Sigmoid colon (tissue), 7 donors: ENCODE measurements at regions of chr5 and their contacts with region 1.

Region 1: DNA sequence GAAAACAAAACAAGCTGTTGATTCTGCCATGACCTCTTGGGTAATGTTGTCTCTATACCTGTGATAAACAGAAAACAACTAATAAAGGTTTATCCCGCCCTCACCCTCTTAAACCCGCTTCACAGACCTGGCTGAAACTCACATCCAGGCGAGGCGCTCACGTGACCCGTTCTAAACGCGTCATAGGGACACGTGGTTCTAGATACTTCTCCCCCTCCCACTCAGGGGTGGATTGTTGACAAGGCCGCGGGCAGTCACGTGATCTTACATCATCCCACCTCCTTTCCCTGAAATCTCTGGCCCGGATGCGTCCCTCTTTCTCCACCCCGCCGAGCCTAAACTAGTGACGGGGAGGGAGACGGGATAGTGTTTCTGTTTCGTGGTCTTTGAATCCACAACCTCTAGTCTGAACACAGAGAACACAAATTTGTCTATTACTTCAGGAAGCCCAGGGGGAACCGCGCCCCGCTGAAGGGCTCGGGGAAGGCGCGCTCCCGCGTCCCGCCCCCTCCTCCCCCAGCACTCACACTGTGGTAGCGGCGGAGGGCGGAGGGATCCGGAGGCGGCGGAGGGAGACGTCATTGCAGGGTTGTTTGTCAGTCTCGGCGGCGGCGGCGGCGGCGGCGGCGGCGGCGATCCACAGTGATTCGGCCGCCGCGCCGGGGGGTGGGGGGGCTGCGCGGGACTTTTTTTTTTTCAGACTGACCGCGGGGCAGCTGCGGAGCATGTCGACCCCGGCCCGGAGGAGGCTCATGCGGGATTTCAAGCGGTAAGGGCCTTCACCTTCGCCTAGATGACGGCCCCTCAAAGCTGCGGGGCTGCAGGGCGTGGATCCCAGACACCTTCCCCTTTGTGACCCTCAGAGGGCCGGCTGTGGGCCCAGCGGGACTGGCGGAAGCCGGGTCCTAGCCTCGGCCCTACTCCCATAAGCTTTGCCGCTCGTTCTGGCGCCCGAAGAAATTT is at the start of gene UBE2B:
- DNase-seq: peak; percentile 100
- H3K4me3 ChIP-seq: peak within 1 kb of the TSS; percentile 72 to 99 (median 96)
- H3K27ac ChIP-seq: peak within 1 kb of the TSS; percentile 97 to 98 (median 98)
- H3K4me1 ChIP-seq: peaks cover 0 to 47% (median 35%) of the 10 kb centered on the region in 4 donors
- H3K27me3 ChIP-seq: no peaks in the 10 kb centered on the region
- CTCF ChIP-seq: no peak
- EP300 ChIP-seq: peak; percentile 22 to 96 (median 50)
- POLR2A ChIP-seq: peak; percentile 49 to 54
- total RNA-seq, gene UBE2B: 72.2 to 122 (median 93.9) TPM

Region 2: GRCh38 chr5:133853646-133854365 is 517.3 kb before region 1 on chr5:
- intact Hi-C with region 1: no loop called
- DNase-seq: no peak
- H3K4me3 ChIP-seq: no peak overlapping the region
- H3K27ac ChIP-seq: no peak overlapping the region
- H3K4me1 ChIP-seq: no peaks in the 10 kb centered on the region
- H3K27me3 ChIP-seq: no peaks in the 10 kb centered on the region
- CTCF ChIP-seq: no peak
- EP300 ChIP-seq: no peak
- POLR2A ChIP-seq: no peak

Region 3: DNA sequence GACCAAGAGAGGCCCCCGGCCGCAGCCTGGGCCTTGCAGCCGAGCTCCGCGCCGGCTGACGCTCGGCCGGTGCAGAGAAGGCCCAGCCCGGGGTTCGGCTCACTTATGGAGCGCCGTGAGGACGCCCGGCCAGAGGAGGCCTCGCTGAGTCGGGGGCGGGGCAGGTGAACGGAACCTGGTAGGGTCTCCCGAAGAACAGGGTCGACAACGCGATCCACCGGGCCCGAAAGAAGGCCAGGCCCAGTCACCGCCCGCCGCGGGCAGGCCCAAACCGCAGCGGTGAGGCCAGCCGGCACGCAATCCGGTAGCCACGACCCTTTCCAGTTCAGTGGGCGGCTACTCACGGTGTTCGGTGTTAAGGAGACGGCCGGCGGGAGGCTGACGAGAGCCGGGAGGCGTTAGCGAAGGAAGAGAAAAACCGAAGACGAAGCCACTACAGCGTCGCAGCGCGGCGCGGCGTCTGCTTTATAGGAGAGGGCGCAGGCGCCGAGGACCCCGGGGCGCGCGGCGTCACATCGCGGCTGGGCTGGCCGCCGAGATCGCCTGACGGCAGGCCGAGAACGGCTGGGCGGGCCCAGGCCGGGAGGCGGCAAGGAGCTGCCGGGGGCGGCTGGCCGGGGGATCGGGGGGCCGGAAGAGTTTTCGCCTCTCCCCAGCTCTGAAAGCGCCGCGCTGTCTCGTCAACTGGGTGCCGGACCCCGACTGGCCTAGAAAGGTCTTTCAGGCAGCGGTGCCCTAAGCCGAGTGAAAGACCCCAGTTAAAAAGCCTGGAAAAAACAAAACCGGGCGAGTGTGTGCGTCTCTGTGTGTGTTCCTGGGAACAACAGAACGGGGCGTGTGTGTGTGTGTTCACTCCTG is 194.4 kb before region 1 on chr5 and contains the start of gene SKP1:
- intact Hi-C with region 1: loop called (anchors 2 kb)
- DNase-seq: peak; percentile 89
- H3K4me3 ChIP-seq: peak within 1 kb of the TSS; percentile 82 to 99 (median 92)
- H3K27ac ChIP-seq: peak within 1 kb of the TSS; percentile 97 to 100 (median 98)
- H3K4me1 ChIP-seq: peaks cover 0 to 43% (median 38%) of the 10 kb centered on the region in 4 donors
- H3K27me3 ChIP-seq: no peaks in the 10 kb centered on the region
- CTCF ChIP-seq: no peak
- EP300 ChIP-seq: no peak
- POLR2A ChIP-seq: peak; percentile 95 to 98
- total RNA-seq, gene SKP1: 193 to 320 (median 271) TPM

Region 4: DNA sequence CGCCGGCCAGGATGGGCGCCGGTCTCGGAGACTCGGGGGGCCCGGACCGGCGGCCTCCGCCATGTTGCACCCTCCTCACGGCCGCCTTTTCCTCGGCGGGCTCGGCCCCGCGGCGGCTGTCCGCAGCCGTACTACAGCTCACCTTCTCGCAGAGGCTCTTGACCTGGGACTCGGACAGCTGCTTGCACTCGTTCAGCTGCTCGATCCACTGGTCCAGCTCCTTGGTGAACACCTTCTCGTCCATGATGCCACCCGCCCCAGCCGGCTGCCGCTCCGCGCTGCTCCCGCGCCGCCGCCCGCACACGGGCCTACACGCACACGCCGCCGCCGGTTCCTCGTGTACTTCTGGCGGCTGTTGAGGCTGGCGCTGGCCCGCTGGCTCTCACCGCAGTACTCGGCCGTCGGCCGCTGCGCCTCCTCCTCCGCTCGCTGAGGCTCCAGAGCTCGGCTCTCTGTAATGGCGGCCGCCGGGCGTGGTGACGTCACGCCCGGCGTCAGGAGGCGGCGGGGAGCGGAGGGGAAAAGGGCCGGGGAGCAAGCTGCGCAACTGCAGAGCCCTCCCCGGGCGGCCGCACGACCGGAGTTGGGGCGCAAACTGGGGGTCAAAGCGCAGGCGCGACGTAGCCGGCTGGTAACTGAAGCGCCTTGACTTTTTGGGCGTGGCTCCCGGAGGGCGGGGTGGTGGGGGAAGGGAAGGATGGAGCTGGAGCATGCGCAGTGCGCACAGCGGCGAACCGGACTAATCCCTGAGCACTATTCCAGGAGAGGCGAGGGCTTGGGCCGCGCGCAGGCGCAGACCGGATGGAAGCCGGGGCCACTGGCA is 145.3 kb before region 1 on chr5 and contains the start of gene PPP2CA:
- intact Hi-C with region 1: loop called (anchors 5 kb)
- DNase-seq: peak; percentile 100
- H3K4me3 ChIP-seq: peak within 1 kb of the TSS; percentile 86 to 99 (median 94)
- H3K27ac ChIP-seq: peak within 1 kb of the TSS; percentile 99 to 100 (median 100)
- H3K4me1 ChIP-seq: peaks cover 0 to 52% (median 47%) of the 10 kb centered on the region in 4 donors
- H3K27me3 ChIP-seq: no peaks in the 10 kb centered on the region
- CTCF ChIP-seq: no peak
- EP300 ChIP-seq: peak in 1 of 4 donors; percentile 22
- POLR2A ChIP-seq: peak; percentile 88 to 92
- total RNA-seq, gene PPP2CA: 102 to 145 (median 118) TPM

Region 5: GRCh38 chr5:134304311-134304710 is 66.8 kb before region 1 on chr5:
- intact Hi-C with region 1: loop called (anchors 2 kb)
- DNase-seq: no peak
- H3K4me3 ChIP-seq: no peak overlapping the region
- H3K27ac ChIP-seq: no peak overlapping the region
- H3K4me1 ChIP-seq: no peaks in the 10 kb centered on the region
- H3K27me3 ChIP-seq: no peaks in the 10 kb centered on the region
- CTCF ChIP-seq: no peak
- EP300 ChIP-seq: no peak
- POLR2A ChIP-seq: no peak

Region 6: DNA sequence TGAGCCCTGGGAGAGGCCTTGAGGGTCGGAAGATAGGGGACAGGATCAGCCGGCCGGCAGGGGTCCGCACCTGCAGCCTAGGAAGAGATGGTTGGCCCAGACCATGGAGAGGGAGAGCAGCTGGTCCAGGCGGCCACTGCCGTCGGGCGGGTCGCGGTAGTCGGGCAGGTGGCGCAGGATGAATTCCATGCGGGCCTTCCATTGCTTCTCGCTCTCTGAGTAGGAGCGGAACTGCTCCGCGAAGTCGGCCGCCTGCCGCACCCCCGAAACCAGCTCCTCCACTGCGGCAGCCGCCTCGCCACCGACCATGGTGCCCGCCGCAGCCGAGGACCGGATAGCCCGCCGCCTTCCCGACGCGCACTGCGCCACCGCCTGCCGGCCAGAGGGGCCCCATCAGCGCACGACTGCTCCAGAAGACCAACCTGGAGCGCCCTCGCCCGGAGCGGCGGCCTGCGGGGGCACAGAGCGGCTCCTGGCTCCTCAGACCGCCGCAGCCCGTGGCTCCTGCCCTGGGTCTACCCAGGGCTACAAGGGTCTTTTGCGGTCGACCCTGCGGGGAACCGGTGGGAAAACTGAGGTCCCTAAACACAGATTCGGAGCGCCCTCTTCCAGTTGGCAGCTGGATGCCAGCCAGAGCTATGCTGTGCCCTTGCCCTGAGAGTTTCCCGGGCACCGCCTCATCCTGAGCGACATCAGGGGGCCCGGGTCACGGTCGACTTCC is 40.6 kb after region 1 on chr5 and contains the start of gene CDKN2AIPNL:
- intact Hi-C with region 1: loop called (anchors 5 kb)
- DNase-seq: peak; percentile 95
- H3K4me3 ChIP-seq: peak within 1 kb of the TSS; percentile 63 to 88 (median 79)
- H3K27ac ChIP-seq: peak within 1 kb of the TSS; percentile 80 to 87 (median 84)
- H3K4me1 ChIP-seq: peaks cover 0 to 27% (median 25%) of the 10 kb centered on the region in 4 donors
- H3K27me3 ChIP-seq: no peaks in the 10 kb centered on the region
- CTCF ChIP-seq: peak; percentile 56 to 81 (median 74)
- EP300 ChIP-seq: no peak
- POLR2A ChIP-seq: peak; percentile 22 to 46
- total RNA-seq, gene CDKN2AIPNL: 18.9 to 28.5 (median 21.3) TPM

Region 7: DNA sequence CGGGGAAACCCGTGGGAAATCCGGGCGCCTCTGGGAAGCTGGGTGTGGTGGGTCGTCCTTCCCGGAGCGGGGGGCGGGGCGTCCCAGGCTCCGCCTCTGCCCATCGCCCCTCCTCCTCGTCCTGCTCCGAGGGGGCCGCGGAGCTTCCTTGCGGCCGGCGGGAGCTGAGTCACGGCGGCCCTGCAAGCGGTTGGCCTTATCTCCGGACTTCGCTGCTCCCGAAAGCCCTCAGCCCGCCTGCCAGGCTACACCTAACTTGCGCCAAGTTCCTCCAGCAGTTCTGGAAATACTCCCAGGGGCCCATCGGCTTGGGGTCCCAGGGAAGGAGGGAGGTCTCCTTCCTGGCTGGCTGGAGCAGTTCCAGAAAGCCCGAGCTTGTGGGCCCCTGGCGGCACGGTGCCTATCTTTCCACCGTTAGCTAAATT is 94.7 kb after region 1 on chr5:
- intact Hi-C with region 1: loop called (anchors 2 kb)
- DNase-seq: peak; percentile 96
- H3K4me3 ChIP-seq: peak overlapping the region; percentile 47 to 59 (median 55)
- H3K27ac ChIP-seq: peak overlapping the region; percentile 93 to 98 (median 96)
- H3K4me1 ChIP-seq: peaks cover 0 to 29% (median 22%) of the 10 kb centered on the region in 4 donors
- H3K27me3 ChIP-seq: no peaks in the 10 kb centered on the region
- CTCF ChIP-seq: no peak
- EP300 ChIP-seq: peak in 2 of 4 donors; percentile 4 to 51
- POLR2A ChIP-seq: peak; percentile 63 to 88

Region 8: DNA sequence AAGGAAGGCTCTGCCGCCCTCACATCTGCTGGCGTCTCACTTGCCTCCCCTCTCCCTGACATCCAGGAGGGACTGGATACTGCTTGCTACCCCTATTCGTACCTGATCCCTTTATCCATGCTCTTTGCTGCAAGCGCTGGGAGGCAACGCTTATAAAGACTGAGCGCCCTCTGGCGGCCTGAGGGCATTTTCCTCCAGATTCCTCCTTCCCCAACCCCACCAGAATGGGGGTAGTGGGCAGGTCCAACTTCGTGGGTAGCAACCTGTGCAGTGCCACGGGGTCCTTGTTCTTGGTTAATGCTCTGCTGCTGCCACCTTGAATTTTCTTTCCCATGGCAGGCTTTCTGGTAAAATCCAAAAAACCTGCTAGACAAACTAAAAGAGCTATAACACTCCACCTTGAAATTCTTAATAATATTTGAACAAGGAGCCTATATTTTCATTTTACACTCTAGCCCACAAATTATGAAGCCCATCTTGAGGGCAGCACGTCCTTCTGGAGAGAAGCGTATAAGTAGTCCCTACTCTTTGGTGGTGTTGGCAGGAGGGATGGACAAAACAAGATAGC is 206.7 kb after region 1 on chr5:
- intact Hi-C with region 1: loop called (anchors 5 kb)
- DNase-seq: peak; percentile 87
- H3K4me3 ChIP-seq: no peak overlapping the region
- H3K27ac ChIP-seq: peak overlapping the region in 1 of 4 donors; percentile 2
- H3K4me1 ChIP-seq: peaks cover 0 to 48% (median 39%) of the 10 kb centered on the region in 4 donors
- H3K27me3 ChIP-seq: no peaks in the 10 kb centered on the region
- CTCF ChIP-seq: peak; percentile 63 to 83 (median 78)
- EP300 ChIP-seq: no peak
- POLR2A ChIP-seq: no peak

Region 9: DNA sequence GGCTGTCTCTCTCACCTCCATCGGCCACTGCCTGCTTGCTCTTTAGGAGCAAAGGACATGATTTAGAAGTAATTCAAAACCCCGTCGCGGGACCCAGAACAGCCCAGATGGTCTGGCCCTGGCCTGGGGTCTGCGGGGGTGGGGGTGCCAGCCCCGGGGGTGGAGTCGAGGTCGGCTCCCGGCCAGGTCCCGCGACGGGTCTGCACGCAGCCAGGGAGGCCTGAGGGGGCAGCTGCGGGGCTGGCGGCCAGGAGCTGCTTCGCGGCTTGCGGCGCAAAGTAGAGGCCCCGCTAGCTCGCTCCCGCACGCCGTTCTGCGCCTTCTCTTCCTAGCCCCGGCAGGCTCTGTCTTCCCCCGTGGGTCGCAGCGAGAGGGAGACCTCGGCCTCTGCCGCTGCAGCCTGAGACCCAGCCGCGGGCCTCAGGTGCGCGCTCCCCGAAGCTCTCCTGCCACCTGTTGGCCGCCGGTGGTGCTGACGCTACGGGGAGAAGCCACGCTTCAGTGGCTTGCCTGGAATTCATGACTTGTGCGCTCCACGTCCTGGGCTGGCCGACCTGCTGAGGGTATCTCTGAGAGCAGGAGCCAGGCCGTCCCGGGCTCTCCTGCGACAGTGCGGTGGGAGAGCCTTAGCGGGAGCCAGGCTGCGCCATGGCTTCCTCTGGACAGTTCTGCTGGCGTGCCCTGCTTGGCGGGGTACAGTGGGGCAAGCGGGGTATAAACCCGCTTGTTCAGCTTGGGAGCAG is 820.1 kb after region 1 on chr5:
- intact Hi-C with region 1: no loop called
- DNase-seq: peak; percentile 85
- H3K4me3 ChIP-seq: peak overlapping the region; percentile 10 to 54 (median 46)
- H3K27ac ChIP-seq: peak overlapping the region in 2 of 4 donors; percentile 23 to 29
- H3K4me1 ChIP-seq: peaks cover 0 to 10% (median 9%) of the 10 kb centered on the region in 4 donors
- H3K27me3 ChIP-seq: no peaks in the 10 kb centered on the region
- CTCF ChIP-seq: peak in 3 of 4 experiments; percentile 80 to 93 (median 89)
- EP300 ChIP-seq: no peak
- POLR2A ChIP-seq: no peak